ENCODE measurements at regions of chr6 and their contacts with region 1.

Region 1: GRCh38 chr6:134925800-134926199 is 24.1 kb downstream of the ALDH8A1 start:
- DNase-seq: no peak
- H3K4me3 ChIP-seq: no peak overlapping the region
- H3K27ac ChIP-seq: no peak overlapping the region
- H3K4me1 ChIP-seq: no peaks in the 10 kb centered on the region
- CTCF ChIP-seq: no peak

Region 2: DNA sequence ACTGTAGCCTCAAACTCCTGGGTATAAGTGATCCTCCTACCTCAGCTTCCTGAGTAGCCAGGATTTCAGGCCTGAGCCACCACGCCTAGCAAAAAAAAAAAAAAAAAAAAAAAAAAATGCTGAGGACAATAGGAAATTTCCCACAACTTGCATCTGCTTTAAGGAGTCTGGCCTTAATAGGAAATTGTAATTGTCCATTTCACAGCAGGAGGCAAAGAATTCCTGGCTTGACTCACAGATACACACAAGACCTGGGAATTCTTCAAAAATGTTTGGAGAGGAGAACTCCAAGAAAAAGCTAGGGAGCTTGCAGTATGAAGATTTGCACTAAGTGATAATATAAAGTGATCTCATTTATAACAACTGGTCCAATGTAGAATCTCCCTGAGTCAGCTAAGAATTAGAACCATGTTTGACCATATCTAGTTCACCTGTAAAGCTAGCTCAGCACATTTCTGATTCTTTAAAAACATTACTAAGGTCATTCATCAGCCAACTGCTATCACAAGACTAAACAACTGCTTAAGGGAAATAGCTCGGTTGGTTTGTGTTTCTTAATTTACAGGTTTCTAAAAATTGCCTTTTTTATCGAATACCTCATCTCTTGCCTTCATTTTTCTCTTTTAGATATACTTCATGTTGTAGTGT is 793.2 kb before region 1 on chr6:
- CTCF ChIA-PET with region 1: no interaction called
- POLR2A ChIA-PET with region 1: interaction called, 10 read pairs
- intact Hi-C with region 1: no loop called
- DNase-seq: no peak
- H3K4me3 ChIP-seq: no peak overlapping the region
- H3K27ac ChIP-seq: no peak overlapping the region
- H3K4me1 ChIP-seq: no peaks in the 10 kb centered on the region
- CTCF ChIP-seq: no peak

Measured in OCI-LY7 (cell line).